Activated CD4-positive, alpha-beta T cell treated with anti-CD3 and anti-CD28 coated beads for 36 hours (primary cell): ENCODE measurements at regions of chrX and their contacts with region 1.

Region 1: DNA sequence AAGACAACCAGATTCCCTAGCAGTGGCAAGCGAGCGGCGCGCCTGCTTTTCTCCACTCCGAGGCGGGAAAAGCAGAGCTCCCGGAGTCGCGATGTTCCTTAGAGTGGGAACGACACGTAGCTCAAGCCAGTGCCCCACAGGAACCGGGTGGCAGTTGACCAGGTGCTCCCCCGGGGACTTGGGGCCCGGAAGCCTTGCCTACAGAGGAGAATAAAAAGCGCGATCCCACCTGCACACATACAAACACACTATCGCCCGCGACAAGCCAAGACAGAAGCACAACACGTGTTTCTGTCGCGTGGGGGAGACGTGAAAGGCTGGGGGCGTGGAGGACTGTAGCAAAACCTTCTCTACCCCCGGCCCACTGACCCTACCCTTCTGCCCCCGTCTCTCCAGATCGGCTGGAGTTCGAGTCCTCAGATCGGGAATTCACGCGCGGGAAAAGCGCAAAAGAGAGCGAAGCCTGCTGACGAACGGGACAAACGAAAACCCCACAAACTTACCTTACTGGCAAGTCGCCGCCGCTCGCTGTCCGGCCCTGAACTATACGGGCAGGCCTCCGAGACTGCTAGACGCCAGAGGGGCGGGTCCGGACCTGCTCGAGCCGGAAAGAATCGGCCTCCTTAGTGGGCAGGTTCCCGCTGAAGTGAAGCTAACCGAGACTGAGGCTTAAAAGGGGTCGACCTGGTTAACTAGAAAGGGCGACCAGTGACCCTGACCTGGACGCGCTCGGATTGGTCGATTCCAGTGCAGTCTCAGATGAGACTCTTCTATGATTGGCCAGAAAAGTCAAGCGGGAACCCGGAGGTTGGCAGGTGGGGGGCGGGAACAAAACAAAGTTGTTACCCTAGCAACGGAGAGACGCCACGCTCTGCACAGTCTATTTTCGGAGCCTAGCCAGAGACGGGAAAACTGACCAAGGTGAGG is at the starts of genes DNAAF6 and NUP62CL:
- DNase-seq: peak; percentile 81
- ATAC-seq: peak; percentile 99
- H3K4me3 Mint-ChIP-seq: peak within 1 kb of the TSS; percentile 87
- H3K27ac Mint-ChIP-seq: peak within 1 kb of the TSS; percentile 73
- H3K4me1 Mint-ChIP-seq: peaks cover 2% of the 10 kb centered on the region
- H3K27me3 Mint-ChIP-seq: no peaks in the 10 kb centered on the region
- total RNA-seq, gene DNAAF6: not detected
- total RNA-seq, gene NUP62CL: 1.7 to 2.5 TPM

Region 2: DNA sequence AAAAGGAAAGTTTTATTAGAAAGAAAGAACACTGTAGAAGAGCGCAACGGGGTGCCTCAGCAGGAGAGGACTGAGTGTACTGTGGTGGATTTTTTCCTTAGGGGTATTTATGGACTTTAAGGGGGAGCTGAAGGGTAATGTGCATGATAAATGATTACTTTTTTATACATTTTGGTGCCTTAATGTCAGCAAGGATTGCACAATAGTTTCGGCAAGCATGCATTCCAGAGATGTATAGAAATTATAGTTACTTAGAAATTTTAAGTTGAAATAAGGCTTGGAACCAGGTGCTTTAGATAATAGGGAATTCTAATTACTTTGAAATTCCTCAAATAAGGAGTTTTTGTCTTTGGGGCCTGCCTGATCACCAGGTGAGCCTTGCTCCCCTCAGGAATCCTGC is 1137.0 kb before region 1 on chrX:
- CTCF ChIA-PET with region 1: no interaction called
- POLR2A ChIA-PET with region 1: no interaction called
- intact Hi-C with region 1: no loop called
- DNase-seq: no peak
- ATAC-seq: no peak
- H3K4me3 Mint-ChIP-seq: no peak overlapping the region
- H3K27ac Mint-ChIP-seq: no peak overlapping the region
- H3K4me1 Mint-ChIP-seq: no peaks in the 10 kb centered on the region
- H3K27me3 Mint-ChIP-seq: no peaks in the 10 kb centered on the region

Region 3: GRCh38 chrX:107118322-107119147 is 87.5 kb before region 1 on chrX and contains the start of gene RBM41:
- CTCF ChIA-PET with region 1: no interaction called
- POLR2A ChIA-PET with region 1: no interaction called
- intact Hi-C with region 1: loop called (anchors 2 to 5 kb)
- DNase-seq: peak; percentile 81
- ATAC-seq: peak; percentile 99
- H3K4me3 Mint-ChIP-seq: peak within 1 kb of the TSS; percentile 99
- H3K27ac Mint-ChIP-seq: peak within 1 kb of the TSS; percentile 98
- H3K4me1 Mint-ChIP-seq: peaks cover 27% of the 10 kb centered on the region
- H3K27me3 Mint-ChIP-seq: no peaks in the 10 kb centered on the region
- total RNA-seq, gene RBM41: 12.0 to 12.2 TPM

Region 4: GRCh38 chrX:107826238-107827029 is 620.4 kb after region 1 on chrX:
- CTCF ChIA-PET with region 1: no interaction called
- POLR2A ChIA-PET with region 1: no interaction called
- intact Hi-C with region 1: no loop called
- DNase-seq: peak; percentile 56
- ATAC-seq: peak; percentile 43
- H3K4me3 Mint-ChIP-seq: peak overlapping the region; percentile 75
- H3K27ac Mint-ChIP-seq: peak overlapping the region; percentile 78
- H3K4me1 Mint-ChIP-seq: peaks cover 46% of the 10 kb centered on the region
- H3K27me3 Mint-ChIP-seq: peaks cover 4% of the 10 kb centered on the region